ENCODE measurements at regions of chr10 and their contacts with region 1.

Region 1: GRCh38 chr10:43407576-43408330 is 1.2 kb downstream of the HNRNPF start:
- DNase-seq: peak; percentile 88
- H3K4me3 Mint-ChIP-seq: peak overlapping the region; percentile 86
- H3K27ac Mint-ChIP-seq: peak overlapping the region; percentile 96
- H3K4me1 Mint-ChIP-seq: peaks cover 36% of the 10 kb centered on the region
- H3K27me3 Mint-ChIP-seq: no peaks in the 10 kb centered on the region

Region 2: DNA sequence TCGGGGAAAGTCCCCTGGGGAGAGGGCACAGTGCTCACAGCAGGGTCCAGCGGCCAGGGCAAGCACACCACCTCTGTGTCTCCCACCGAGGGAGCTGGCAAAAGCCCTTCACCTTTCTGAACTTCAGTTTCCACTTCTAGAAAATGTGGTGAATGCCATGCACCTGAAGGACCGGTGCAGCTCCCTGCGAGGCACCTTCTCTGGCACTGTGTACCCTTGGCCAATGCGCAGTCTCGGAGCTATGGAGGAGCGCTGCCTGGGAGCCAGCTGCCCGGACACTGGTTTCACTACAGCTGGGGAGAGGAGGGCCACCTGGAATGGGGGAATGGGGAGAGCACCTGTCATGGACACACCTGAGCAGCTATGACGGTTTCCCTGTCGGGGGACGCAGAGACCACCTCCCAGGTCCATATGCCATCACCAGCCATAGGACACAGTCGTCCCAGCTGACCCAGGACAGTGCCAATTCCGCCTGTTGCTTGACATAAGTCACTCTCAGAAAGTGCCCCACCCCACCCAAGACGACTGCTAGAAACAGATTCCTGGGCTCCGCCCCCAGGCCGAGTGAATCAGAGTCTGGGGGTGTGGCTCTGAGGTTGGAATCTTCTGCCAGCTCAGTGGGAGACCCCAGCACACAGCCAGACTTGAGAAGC is 157.7 kb before region 1 on chr10:
- CTCF ChIA-PET with region 1: no interaction called
- POLR2A ChIA-PET with region 1: no interaction called
- DNase-seq: peak; percentile 17
- H3K4me3 Mint-ChIP-seq: no peak overlapping the region
- H3K27ac Mint-ChIP-seq: no peak overlapping the region
- H3K4me1 Mint-ChIP-seq: peaks cover 9% of the 10 kb centered on the region
- H3K27me3 Mint-ChIP-seq: peaks cover 21% of the 10 kb centered on the region

Region 3: GRCh38 chr10:43273543-43273942 is 134.2 kb before region 1 on chr10:
- CTCF ChIA-PET with region 1: no interaction called
- POLR2A ChIA-PET with region 1: no interaction called
- DNase-seq: no peak
- H3K4me3 Mint-ChIP-seq: no peak overlapping the region
- H3K27ac Mint-ChIP-seq: no peak overlapping the region
- H3K4me1 Mint-ChIP-seq: peaks cover 6% of the 10 kb centered on the region
- H3K27me3 Mint-ChIP-seq: peaks cover 61% of the 10 kb centered on the region

Region 4: DNA sequence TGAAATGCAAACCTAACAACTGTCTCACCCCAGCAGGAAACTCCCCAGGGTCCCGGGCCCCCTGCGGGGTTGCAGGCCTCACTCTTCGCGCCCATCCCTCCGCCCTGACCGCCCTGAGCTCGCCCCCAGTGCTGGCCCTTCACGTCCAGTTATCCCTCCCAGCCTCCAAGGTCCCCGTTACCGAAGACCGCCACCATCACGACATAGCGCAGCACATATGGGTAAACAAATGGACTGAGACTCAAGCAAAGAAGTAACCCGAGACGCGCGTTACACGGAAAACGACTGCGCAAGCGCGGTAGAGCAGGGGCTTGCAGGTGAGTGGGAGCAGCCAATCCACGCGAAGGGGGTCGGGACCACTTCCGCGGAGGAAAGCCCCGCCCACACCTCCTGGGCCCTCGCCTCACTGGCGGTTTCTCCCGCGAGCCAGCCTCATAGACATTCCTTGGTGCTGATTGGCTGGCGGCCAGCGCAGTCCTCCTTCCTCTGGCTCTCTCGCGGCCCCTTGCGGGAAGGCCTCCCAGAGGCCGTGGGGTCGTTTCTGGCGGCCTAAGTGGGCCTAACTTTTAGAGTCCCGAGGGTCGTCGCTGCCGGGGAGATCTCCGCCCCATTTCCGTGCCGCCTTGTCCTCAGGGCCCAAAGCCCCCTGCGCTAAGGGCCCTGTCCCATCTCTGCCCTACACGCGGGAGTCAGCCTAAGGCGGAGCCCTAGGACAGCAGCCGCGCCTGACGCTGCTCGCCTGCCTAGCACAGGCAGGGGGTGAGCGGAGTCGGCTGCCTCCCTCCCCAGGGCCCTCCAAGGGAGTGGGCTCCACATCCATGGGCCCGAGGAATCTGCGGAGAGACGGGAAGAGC is 45.5 kb before region 1 on chr10:
- CTCF ChIA-PET with region 1: no interaction called
- POLR2A ChIA-PET with region 1: interaction called, 12 read pairs
- DNase-seq: peak; percentile 99
- H3K4me3 Mint-ChIP-seq: peak overlapping the region; percentile 91
- H3K27ac Mint-ChIP-seq: peak overlapping the region; percentile 88
- H3K4me1 Mint-ChIP-seq: peaks cover 37% of the 10 kb centered on the region
- H3K27me3 Mint-ChIP-seq: no peaks in the 10 kb centered on the region

Region 5: GRCh38 chr10:43396928-43397624 is 10.7 kb before region 1 on chr10:
- CTCF ChIA-PET with region 1: interaction called, 11 read pairs
- POLR2A ChIA-PET with region 1: interaction called, 192 read pairs
- DNase-seq: peak; percentile 89
- H3K4me3 Mint-ChIP-seq: peak overlapping the region; percentile 90
- H3K27ac Mint-ChIP-seq: peak overlapping the region; percentile 93
- H3K4me1 Mint-ChIP-seq: peaks cover 76% of the 10 kb centered on the region
- H3K27me3 Mint-ChIP-seq: no peaks in the 10 kb centered on the region

Region 6: DNA sequence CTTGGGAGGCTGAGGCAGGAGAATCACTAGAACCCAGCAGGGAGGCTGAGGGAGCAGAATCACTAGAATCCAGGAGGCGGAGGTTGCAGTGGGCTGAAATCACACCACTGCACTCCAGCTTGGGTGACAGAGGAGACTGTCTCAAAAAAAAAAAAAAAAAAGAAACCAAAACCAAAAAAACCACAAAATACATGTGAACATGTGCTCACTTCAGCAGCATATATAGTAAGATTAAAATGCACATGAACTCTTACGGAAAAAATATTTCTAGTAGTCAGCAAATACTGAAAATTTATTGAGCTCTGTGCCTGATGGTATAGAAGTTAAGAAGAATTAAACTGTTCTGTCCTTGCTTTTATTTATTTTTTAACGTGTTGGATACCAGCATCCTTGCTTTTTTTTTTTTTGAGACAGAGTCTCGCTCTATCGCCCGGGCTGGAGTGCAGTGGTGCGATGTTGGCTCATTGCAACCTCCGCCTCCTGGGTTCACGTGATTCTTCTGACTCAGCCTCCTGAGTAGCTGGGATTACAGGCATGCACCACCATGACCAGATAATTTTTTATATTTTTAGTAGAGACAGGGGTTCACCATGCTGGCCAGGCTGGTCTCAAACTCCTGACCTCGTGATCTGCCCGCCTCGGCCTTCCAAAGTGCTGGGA is 19.5 kb after region 1 on chr10:
- CTCF ChIA-PET with region 1: interaction called, 4 read pairs
- POLR2A ChIA-PET with region 1: interaction called, 17 read pairs
- DNase-seq: no peak
- H3K4me3 Mint-ChIP-seq: peak overlapping the region; percentile 12
- H3K27ac Mint-ChIP-seq: peak overlapping the region; percentile 82
- H3K4me1 Mint-ChIP-seq: peaks cover 19% of the 10 kb centered on the region
- H3K27me3 Mint-ChIP-seq: no peaks in the 10 kb centered on the region

Measured in activated CD4-positive, alpha-beta memory T cell treated with anti-CD3 and anti-CD28 coated beads, Interleukin-2, amount 10 ng/mL, durations not matched to agents 7 days and 5 days (primary cell).